ENCODE measurements at regions of chr13 and their contacts with region 1.

Region 1: DNA sequence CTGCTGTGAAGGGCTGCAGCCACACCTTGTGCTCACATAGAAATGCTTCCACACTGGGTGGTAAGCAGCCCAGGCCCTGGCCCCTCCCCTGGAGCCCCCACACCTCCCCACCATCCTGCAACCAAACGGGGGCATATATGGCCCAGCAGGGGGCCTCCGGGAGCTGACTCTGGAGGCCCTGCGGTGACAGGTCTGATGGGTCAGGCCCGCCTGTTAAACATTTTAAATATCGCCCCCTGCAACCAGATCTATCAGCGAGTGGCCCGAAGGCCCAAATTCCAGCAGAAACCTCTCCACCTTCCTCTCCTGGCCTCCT is 48.0 kb upstream of the KATNAL1 start:
- DNase-seq: peak; percentile 37
- H3K4me3 ChIP-seq: no peak overlapping the region
- H3K27ac ChIP-seq: no peak overlapping the region
- H3K4me1 ChIP-seq: no peaks in the 10 kb centered on the region
- H3K27me3 ChIP-seq: no peaks in the 10 kb centered on the region
- CTCF ChIP-seq: peak; percentile 43 to 72
- POLR2A ChIP-seq: no peak

Region 2: DNA sequence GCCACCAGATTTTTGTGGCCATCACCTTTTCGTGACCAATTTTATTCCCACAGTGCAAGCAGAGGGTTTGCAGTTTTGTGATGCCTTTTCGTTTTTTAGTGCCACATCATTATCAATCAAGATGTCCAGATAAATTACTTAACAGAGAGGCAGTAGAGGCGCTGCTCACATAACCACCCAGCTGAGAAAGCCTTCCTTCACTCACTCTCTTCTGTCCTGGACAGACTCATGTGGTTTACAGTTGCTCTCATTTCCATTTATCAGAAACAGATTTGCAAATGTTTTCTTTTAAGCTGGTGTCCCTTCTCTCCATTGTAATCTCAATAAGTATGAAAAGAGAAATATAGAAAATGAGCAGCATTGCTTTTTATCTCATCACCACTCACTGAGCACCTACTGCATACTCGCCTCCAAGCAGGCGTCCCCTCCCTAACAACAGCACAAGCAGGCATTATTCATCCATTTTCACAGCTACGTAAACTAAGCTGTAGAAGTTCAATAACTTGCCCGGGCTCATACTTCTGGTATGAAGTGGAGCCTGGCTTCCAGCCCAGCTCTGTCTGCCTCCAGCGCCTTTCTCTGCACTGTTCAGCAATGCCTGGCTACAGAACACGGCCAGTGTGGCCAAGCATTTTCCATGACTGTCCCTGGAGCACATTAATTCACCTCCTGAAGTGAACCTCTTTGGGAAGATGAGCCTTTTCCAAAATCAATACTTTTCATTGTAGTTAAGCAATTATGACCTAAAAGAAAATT is 13.3 kb before region 1 on chr13:
- CTCF ChIA-PET with region 1: interaction called, 16 read pairs
- POLR2A ChIA-PET with region 1: no interaction called
- dilution Hi-C with region 1: no loop called
- intact Hi-C with region 1: no loop called
- DNase-seq: peak; percentile 71
- H3K4me3 ChIP-seq: no peak overlapping the region
- H3K27ac ChIP-seq: no peak overlapping the region
- H3K4me1 ChIP-seq: no peaks in the 10 kb centered on the region
- H3K27me3 ChIP-seq: no peaks in the 10 kb centered on the region
- CTCF ChIP-seq: no peak
- POLR2A ChIP-seq: no peak

Region 3: DNA sequence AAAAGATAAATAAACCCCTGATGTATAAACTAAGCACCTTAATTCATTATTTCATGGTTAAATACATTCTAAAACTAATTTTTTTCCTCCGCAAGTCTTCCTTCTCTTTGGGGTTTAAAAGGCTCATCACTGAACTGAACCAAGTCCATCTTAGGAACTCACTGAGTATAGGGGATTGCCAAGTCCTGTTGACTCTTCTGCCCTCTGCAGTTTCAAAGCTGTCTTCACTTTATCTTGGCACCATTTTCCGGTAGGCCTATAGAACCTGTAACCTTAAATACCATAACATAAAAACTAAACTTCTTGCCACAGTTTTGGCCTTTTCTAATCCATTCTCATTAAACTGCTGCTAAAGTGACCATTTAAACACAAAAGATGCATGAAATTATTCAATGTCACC is 195.8 kb after region 1 on chr13:
- CTCF ChIA-PET with region 1: no interaction called
- POLR2A ChIA-PET with region 1: no interaction called
- dilution Hi-C with region 1: no loop called
- intact Hi-C with region 1: loop called (anchors 1 kb)
- DNase-seq: peak; percentile 26
- H3K4me3 ChIP-seq: no peak overlapping the region
- H3K27ac ChIP-seq: no peak overlapping the region
- H3K4me1 ChIP-seq: no peaks in the 10 kb centered on the region
- H3K27me3 ChIP-seq: no peaks in the 10 kb centered on the region
- CTCF ChIP-seq: peak in 1 of 2 donors; percentile 8
- POLR2A ChIP-seq: no peak

Region 4: GRCh38 chr13:30572859-30573275 is 217.5 kb after region 1 on chr13:
- CTCF ChIA-PET with region 1: no interaction called
- POLR2A ChIA-PET with region 1: no interaction called
- dilution Hi-C with region 1: no loop called
- intact Hi-C with region 1: loop called (anchors 5 kb)
- DNase-seq: peak; percentile 77
- H3K4me3 ChIP-seq: peak overlapping the region; percentile 0 to 88 (median 73)
- H3K27ac ChIP-seq: peak overlapping the region; percentile 44
- H3K4me1 ChIP-seq: peaks cover 9% of the 10 kb centered on the region
- H3K27me3 ChIP-seq: no peaks in the 10 kb centered on the region
- CTCF ChIP-seq: peak in 1 of 2 donors; percentile 12
- POLR2A ChIP-seq: no peak

Region 5: GRCh38 chr13:31174018-31174417 is 818.7 kb after region 1 on chr13:
- CTCF ChIA-PET with region 1: no interaction called
- POLR2A ChIA-PET with region 1: no interaction called
- dilution Hi-C with region 1: no loop called
- intact Hi-C with region 1: no loop called
- DNase-seq: no peak
- H3K4me3 ChIP-seq: no peak overlapping the region
- H3K27ac ChIP-seq: no peak overlapping the region
- H3K4me1 ChIP-seq: no peaks in the 10 kb centered on the region
- H3K27me3 ChIP-seq: no peaks in the 10 kb centered on the region
- CTCF ChIP-seq: no peak
- POLR2A ChIP-seq: no peak

Measured in endothelial cell of umbilical vein (primary cell).